ENCODE measurements at regions of chr9 and their contacts with region 1.

Region 1: DNA sequence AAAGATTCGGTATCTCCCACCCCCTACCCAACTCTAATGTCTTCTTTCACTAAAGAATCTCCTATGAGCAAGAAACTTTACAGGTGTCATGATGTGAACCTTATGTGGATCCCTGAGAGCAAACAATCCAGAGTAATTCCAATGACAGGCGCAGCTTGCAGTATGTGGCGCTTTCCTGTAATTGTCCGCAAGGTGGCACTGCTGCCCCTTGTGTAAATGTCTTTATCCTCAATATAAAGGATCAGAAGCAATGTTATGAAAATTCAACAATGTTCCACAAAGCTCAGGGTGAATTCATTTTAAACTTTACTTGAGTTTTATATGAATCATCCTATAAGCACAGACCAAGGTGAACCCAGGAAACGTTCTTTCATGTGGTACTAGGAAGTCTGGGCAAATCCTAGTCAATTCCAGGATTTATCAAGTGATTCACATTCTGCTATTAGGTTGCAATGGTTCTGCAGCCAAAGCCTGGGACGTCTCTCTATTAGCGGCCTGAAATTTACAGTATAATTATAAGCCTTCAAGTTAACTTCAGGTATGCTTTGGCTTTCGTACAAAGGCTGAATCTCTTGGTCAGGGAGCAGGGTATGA is 113.7 kb downstream of the TRPM6 start:
- DNase-seq: peak; percentile 19 to 75
- H3K4me3 ChIP-seq: no peak overlapping the region
- H3K27ac ChIP-seq: no peak overlapping the region
- H3K4me1 ChIP-seq: 0 out of 7 replicates have a peak, but pooled peaks cover 0 to 2% (median 0%) of the 10 kb centered on the region in 4 experiments
- H3K27me3 ChIP-seq: no peaks in the 10 kb centered on the region
- CTCF ChIP-seq: peak; percentile 66 to 86 (median 80)
- EP300 ChIP-seq: no peak
- POLR2A ChIP-seq: no peak
- RAD21 ChIP-seq: peak; percentile 91 to 92

Region 2: DNA sequence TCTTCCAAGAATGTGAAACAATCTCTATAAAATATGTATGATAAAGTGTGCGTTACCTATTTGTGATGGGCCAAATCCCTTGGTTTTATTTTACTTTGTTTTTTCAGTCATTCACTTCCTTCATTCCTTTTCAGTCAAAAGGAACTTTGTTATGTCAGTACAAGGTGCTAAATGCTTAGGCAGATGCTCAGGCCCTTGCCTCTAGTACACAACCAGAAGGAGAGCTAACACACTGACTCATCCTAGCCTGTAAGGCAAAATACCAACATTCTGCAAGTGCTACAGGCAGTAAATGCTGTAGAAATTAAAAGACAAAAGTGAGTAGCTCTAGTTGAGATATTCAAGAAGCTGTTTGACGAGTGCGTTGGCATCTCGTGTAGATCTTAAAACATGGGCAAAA is 64.4 kb after region 1 on chr9:
- CTCF ChIA-PET with region 1: interaction called, 12 read pairs
- POLR2A ChIA-PET with region 1: no interaction called
- DNase-seq: no peak
- H3K4me3 ChIP-seq: no peak overlapping the region
- H3K27ac ChIP-seq: no peak overlapping the region
- H3K4me1 ChIP-seq: no peaks in the 10 kb centered on the region
- H3K27me3 ChIP-seq: no peaks in the 10 kb centered on the region
- CTCF ChIP-seq: no peak
- EP300 ChIP-seq: no peak
- POLR2A ChIP-seq: no peak
- RAD21 ChIP-seq: no peak

Region 3: GRCh38 chr9:74940600-74940999 is 166.6 kb after region 1 on chr9:
- CTCF ChIA-PET with region 1: interaction called, 12 read pairs
- POLR2A ChIA-PET with region 1: no interaction called
- DNase-seq: no peak
- H3K4me3 ChIP-seq: no peak overlapping the region
- H3K27ac ChIP-seq: no peak overlapping the region
- H3K4me1 ChIP-seq: no peaks in the 10 kb centered on the region
- H3K27me3 ChIP-seq: no peaks in the 10 kb centered on the region
- CTCF ChIP-seq: no peak
- EP300 ChIP-seq: no peak
- POLR2A ChIP-seq: no peak
- RAD21 ChIP-seq: no peak

Region 4: DNA sequence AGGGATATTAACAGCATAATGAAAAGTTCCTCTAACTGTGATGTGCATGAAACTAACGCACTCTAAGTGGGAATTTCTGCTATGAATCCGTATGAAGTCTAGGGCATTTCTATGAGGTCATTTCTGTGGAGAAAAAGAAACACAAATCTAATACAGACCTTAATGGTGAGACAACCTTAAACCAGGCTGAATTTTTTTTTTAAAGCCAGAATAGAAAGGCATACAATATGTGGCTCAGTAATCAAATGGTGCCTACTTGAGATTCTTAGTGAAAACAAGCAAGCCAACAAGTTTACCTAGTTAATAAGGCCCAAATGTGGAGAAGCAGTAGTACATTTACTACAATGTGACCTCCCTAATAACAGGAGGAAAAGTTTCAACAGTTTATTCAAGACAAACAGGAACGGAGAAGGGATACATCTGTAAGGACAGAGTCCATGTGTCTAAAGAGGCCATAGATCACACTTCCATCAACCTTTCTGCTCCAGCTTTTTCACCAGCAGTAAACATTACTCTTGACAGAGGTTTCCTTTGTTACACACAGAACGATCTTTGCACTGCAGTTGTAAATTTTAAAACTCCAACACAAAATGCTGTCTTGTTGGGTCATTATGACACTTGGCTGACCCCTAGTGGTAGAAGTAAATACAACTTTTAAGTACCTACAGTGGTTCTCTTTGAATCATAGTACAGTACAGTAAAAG is 227.9 kb after region 1 on chr9:
- CTCF ChIA-PET with region 1: interaction called, 241 read pairs
- POLR2A ChIA-PET with region 1: no interaction called
- DNase-seq: no peak
- H3K4me3 ChIP-seq: no peak overlapping the region
- H3K27ac ChIP-seq: no peak overlapping the region
- H3K4me1 ChIP-seq: no peaks in the 10 kb centered on the region
- H3K27me3 ChIP-seq: no peaks in the 10 kb centered on the region
- CTCF ChIP-seq: peak in 2 of 3 experiments; percentile 56 to 75; a peak in 3 of 4 replicates
- EP300 ChIP-seq: no peak
- POLR2A ChIP-seq: no peak
- RAD21 ChIP-seq: peak; percentile 80 to 82

Region 5: DNA sequence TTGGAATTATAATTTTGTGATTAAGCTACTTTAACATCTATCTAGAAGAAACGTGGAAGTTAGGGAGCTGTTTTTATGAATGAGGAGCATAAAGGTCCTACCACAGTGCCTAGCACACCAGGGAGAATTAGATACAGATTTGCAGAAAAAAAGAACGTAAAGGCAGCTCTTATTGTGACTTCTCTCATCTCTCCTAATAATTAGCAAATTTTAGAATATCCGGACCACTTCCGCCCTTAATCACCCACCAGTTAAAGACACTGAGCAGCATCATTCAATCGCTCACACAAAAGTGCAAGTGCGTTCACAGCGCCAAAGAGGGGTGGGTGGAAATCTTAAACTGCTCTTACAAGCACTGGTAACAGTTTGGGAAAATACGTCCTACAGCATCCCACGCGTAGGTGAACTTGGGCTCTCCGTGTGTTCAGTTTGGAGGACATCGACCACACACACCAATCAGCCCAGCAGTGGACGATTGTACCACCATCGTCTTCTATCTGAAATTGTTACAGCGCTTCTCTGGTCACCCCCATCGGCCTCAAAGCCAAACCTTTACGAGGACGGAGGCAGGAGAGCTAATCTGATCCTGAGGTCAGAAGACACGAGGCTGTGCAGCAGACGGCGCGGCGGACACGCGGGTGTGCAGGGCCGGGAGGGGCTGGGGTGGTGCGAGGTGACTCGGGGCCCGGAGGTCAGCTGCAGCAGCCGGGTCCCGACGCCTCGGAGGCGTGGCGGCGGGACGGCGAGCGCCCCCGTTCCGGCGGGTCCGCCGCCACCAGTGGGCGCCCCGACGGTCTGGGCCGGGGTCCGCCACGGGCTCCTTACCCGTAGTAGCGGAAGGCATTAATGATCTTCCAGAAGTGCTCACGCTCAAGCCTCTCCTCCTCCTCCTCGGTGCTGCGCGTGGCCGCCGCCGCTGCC is 253.5 kb after region 1 on chr9:
- CTCF ChIA-PET with region 1: interaction called, 14 read pairs
- POLR2A ChIA-PET with region 1: no interaction called
- DNase-seq: peak; percentile 1 to 79
- H3K4me3 ChIP-seq: peak overlapping the region; percentile 61 to 99 (median 80)
- H3K27ac ChIP-seq: peak overlapping the region; percentile 87
- H3K4me1 ChIP-seq: peaks cover 0 to 2% (median 0%) of the 10 kb centered on the region in 4 experiments; a peak in 1 of 7 replicates
- H3K27me3 ChIP-seq: no peaks in the 10 kb centered on the region
- CTCF ChIP-seq: peak in 2 of 3 experiments; percentile 33 to 35; a peak in 3 of 4 replicates
- EP300 ChIP-seq: no peak
- POLR2A ChIP-seq: no peak
- RAD21 ChIP-seq: no peak

Region 6: GRCh38 chr9:75071530-75072124 is 297.6 kb after region 1 on chr9:
- CTCF ChIA-PET with region 1: interaction called, 97 read pairs
- POLR2A ChIA-PET with region 1: no interaction called
- DNase-seq: no peak
- H3K4me3 ChIP-seq: no peak overlapping the region
- H3K27ac ChIP-seq: no peak overlapping the region
- H3K4me1 ChIP-seq: peaks cover 0 to 3% (median 0%) of the 10 kb centered on the region in 4 experiments; a peak in 2 of 7 replicates
- H3K27me3 ChIP-seq: no peaks in the 10 kb centered on the region
- CTCF ChIP-seq: no peak
- EP300 ChIP-seq: no peak
- POLR2A ChIP-seq: no peak
- RAD21 ChIP-seq: no peak